ENCODE measurements at regions of chr1 and their contacts with region 1.

Region 1: GRCh38 chr1:169186106-169186505 is 79.6 kb downstream of the ATP1B1 start:
- DNase-seq: no peak
- ATAC-seq: peak; percentile 90 to 98
- H3K4me3 ChIP-seq: no peak overlapping the region
- H3K27ac ChIP-seq: peak overlapping the region; percentile 2 to 55 (median 32)
- H3K4me1 ChIP-seq: peaks cover 21 to 26% of the 10 kb centered on the region in 2 donors
- H3K27me3 ChIP-seq: no peaks in the 10 kb centered on the region
- CTCF ChIP-seq: no peak
- POLR2A ChIP-seq: no peak

Region 2: GRCh38 chr1:168617974-168618750 is 567.9 kb before region 1 on chr1:
- in situ Hi-C with region 1: no loop called
- intact Hi-C with region 1: no loop called
- DNase-seq: no peak
- ATAC-seq: no peak
- H3K4me3 ChIP-seq: no peak overlapping the region
- H3K27ac ChIP-seq: peak overlapping the region; percentile 46 to 100 (median 70)
- H3K4me1 ChIP-seq: peaks cover 40 to 48% of the 10 kb centered on the region in 2 donors
- H3K27me3 ChIP-seq: no peaks in the 10 kb centered on the region
- CTCF ChIP-seq: no peak
- POLR2A ChIP-seq: no peak

Region 3: GRCh38 chr1:169106095-169106920 is 79.8 kb before region 1 on chr1 and contains the start of gene ATP1B1:
- in situ Hi-C with region 1: no loop called
- intact Hi-C with region 1: loop called (anchors 5 kb)
- DNase-seq: peak; percentile 82 to 89
- ATAC-seq: peak; percentile 57 to 64
- H3K4me3 ChIP-seq: peak within 1 kb of the TSS; percentile 65 to 94 (median 77)
- H3K27ac ChIP-seq: peak within 1 kb of the TSS; percentile 93 to 99 (median 96)
- H3K4me1 ChIP-seq: peaks cover 18 to 25% of the 10 kb centered on the region in 2 donors
- H3K27me3 ChIP-seq: no peaks in the 10 kb centered on the region
- CTCF ChIP-seq: peak; percentile 52 to 94 (median 83)
- POLR2A ChIP-seq: peak; percentile 97 to 99
- total RNA-seq, gene ATP1B1: 111 to 377 (median 324) TPM

Measured in gastrocnemius medialis (tissue), 4 donors.